ENCODE measurements at regions of chr7 and their contacts with region 1.

Region 1: GRCh38 chr7:1225441-1226185 is 7.1 kb upstream of the UNCX start:
- H3K4me3 Mint-ChIP-seq: no peak overlapping the region
- H3K27ac Mint-ChIP-seq: no peak overlapping the region
- H3K4me1 Mint-ChIP-seq: peaks cover 21% of the 10 kb centered on the region
- H3K27me3 Mint-ChIP-seq: peaks cover 84% of the 10 kb centered on the region

Region 2: GRCh38 chr7:561631-562373 is 663.8 kb before region 1 on chr7:
- intact Hi-C with region 1: no loop called
- H3K4me3 Mint-ChIP-seq: no peak overlapping the region
- H3K27ac Mint-ChIP-seq: no peak overlapping the region
- H3K4me1 Mint-ChIP-seq: peaks cover 9% of the 10 kb centered on the region
- H3K27me3 Mint-ChIP-seq: peaks cover 4% of the 10 kb centered on the region

Region 3: DNA sequence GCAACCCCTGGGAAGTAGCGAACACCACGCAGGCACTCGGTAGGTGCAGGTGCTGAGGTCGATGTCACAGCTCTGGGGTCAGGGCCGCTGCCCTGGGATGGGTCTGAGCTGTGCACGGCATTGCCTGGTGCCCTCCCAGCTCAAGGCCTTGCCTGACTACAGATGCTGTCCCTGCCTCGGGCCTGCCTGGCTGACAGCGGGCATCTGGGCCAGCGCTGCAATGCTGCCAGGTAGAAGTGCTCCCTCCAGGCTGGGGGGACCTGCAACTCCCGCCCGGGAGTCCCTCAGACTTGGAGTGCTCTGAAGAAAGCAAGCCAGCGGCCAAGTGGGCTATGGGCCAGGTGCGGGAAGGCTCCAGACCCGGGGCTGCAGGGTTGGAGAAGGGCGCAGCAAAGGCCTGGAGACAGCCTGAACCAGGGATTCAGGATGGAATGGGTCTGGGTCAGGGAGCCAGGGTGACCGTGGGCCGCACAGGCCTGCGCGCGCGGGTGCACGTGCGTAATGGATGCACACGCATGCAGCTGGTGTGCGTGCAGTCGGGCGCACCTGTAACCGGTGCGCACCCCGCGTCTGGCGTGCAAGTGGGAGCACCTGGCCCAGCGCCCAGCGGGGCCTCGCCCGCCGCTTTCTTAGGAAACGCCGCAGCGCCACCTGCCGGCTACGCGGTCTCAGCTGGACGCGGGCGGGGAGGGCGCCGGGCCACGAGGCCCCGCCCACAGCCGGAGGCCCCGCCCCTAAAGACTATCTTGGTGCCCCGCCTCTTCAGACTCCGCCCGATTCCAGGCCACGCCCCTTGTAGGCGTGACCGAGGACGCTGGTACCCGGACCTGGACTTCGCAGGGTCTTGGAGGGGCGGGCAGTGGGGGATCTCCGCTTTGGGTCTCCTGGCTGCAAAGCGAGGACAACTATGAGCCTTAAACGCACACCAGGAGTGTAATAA is 187.0 kb after region 1 on chr7:
- intact Hi-C with region 1: loop called (anchors 5 kb)
- H3K4me3 Mint-ChIP-seq: peak overlapping the region; percentile 51
- H3K27ac Mint-ChIP-seq: no peak overlapping the region
- H3K4me1 Mint-ChIP-seq: peaks cover 20% of the 10 kb centered on the region
- H3K27me3 Mint-ChIP-seq: peaks cover 41% of the 10 kb centered on the region

Region 4: GRCh38 chr7:1473864-1474512 is 248.4 kb after region 1 on chr7:
- intact Hi-C with region 1: loop called (anchors 10 kb)
- H3K4me3 Mint-ChIP-seq: no peak overlapping the region
- H3K27ac Mint-ChIP-seq: no peak overlapping the region
- H3K4me1 Mint-ChIP-seq: peaks cover 5% of the 10 kb centered on the region
- H3K27me3 Mint-ChIP-seq: no peaks in the 10 kb centered on the region